Psoas muscle (tissue), 8 donors: ENCODE measurements at regions of chr11 and their contacts with region 1.

Region 1: DNA sequence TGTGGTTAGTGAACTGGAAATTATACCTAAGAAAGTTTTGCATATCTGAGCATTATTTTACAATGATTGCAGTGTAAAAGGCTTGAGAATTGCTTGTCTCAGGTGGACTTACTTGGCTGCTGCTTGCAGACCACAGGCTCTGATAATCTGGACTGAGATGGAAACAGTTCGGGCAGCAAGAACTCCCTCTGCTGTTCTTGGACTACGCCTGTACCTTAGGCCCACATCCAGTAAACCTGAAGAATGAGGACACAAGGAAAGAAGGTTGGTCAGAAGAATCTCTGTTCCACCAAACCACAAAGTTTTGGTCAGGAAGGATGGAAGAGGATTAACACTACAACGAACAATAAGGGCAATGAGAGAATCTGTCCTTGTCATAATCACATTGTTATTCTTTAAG is 80.1 kb downstream of the C2CD3 start:
- DNase-seq: no peak
- ATAC-seq: peak; percentile 61 to 86 (median 70)
- H3K4me3 ChIP-seq: no peak overlapping the region
- H3K27ac ChIP-seq: no peak overlapping the region
- H3K4me1 ChIP-seq: no peaks in the 10 kb centered on the region
- H3K27me3 ChIP-seq: no peaks in the 10 kb centered on the region
- CTCF ChIP-seq: peak; percentile 46

Region 2: DNA sequence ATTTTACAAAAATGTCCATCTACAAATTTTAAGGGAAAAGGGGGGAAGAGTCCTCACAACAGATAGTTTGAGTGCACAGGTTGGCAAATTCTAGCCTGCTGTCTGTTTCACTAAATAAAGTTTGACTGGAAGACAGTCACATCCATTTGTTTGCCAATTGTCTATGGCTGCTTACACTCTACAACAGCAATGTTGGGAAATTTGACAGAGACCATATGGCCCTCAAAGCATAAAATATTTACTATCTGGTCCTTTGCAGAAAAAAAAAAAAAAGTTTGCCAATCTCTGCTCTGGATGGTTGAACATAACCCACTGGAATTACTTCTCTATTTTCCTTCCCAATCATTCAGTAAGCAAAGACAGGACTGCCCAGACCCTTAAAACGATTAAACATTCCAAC is 1036.7 kb before region 1 on chr11:
- intact Hi-C with region 1: no loop called
- DNase-seq: no peak
- ATAC-seq: no peak
- H3K4me3 ChIP-seq: no peak overlapping the region
- H3K27ac ChIP-seq: no peak overlapping the region
- H3K4me1 ChIP-seq: no peaks in the 10 kb centered on the region
- H3K27me3 ChIP-seq: no peaks in the 10 kb centered on the region
- CTCF ChIP-seq: no peak

Region 3: GRCh38 chr11:73965076-73965860 is 125.4 kb before region 1 on chr11:
- intact Hi-C with region 1: loop called (anchors 2 to 5 kb)
- DNase-seq: peak in 1 of 2 donors; percentile 46
- ATAC-seq: no peak
- H3K4me3 ChIP-seq: no peak overlapping the region
- H3K27ac ChIP-seq: no peak overlapping the region
- H3K4me1 ChIP-seq: peaks cover 7% of the 10 kb centered on the region
- H3K27me3 ChIP-seq: no peaks in the 10 kb centered on the region
- CTCF ChIP-seq: no peak

Region 4: DNA sequence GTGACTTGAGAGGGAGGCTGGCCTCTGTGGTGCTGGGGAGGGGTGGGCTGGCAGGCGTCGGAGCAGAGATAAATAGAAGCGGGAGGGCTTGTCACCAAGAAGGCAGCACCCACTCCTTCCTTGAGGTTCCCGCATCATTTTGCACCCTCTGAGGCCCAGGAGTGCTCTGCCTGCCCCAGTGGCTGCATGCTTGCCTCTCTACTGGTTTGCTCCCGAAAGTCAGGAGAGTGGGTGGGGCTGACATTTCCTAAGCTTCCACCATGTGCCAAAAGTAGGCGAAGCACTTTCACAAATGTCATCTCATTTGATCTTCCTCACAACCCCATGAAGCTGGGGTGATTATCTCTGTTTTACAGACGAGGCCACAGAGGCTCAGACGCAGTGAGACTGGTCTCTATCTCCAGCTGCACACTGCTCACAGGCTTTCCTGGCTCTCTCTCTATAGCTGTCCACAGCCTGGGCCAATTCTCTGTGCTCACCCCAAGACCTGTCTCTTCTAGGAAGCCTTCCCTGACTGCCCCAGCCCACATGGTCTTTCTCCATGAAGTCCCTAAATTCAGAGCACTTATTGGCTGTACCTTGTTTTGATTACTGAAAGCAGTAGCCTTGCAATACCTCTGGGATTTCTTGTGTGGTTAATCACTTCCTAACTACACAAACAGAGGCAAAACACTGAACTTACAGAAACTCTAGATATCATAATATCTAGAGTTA is 79.2 kb before region 1 on chr11:
- intact Hi-C with region 1: no loop called
- DNase-seq: no peak
- ATAC-seq: no peak
- H3K4me3 ChIP-seq: no peak overlapping the region
- H3K27ac ChIP-seq: peak overlapping the region; percentile 98
- H3K4me1 ChIP-seq: peaks cover 28% of the 10 kb centered on the region
- H3K27me3 ChIP-seq: no peaks in the 10 kb centered on the region
- CTCF ChIP-seq: no peak

Region 5: GRCh38 chr11:74269161-74269811 is 178.6 kb after region 1 on chr11:
- intact Hi-C with region 1: no loop called
- DNase-seq: no peak
- ATAC-seq: peak in 1 of 4 donors; percentile 8
- H3K4me3 ChIP-seq: no peak overlapping the region
- H3K27ac ChIP-seq: no peak overlapping the region
- H3K4me1 ChIP-seq: no peaks in the 10 kb centered on the region
- H3K27me3 ChIP-seq: no peaks in the 10 kb centered on the region
- CTCF ChIP-seq: no peak

Region 6: DNA sequence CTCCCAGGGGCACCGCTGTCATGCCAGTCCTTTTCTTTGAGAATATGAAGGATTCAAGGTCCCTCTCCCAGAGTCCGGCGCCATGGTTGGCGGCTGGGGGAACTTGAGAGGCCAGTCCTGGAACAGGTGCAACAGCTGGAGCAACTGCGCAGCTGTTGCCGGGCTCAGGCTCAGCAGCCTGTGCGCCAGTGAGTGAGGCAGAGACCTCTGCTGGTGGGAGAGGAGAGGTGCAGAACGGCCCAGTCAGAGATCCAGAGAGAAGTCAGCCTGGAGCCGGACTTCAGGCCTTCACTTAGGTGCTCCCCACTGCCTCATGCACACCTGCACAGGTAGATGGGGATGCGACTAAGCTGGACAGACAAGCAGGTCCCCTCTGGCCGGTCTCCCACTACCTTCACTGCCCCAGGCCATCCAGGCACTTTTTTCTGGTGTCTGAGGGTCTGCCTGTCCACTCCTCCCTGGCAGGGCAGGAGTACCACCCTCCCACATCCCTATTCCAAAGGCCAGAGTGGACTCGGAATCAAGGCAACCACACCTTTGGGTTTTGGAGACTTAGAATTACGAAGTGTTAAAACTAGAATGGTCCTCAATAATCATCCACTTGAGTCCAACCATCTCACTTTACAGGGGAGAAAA is 636.0 kb after region 1 on chr11:
- intact Hi-C with region 1: no loop called
- DNase-seq: peak; percentile 83 to 92
- ATAC-seq: peak; percentile 98 to 99 (median 98)
- H3K4me3 ChIP-seq: no peak overlapping the region
- H3K27ac ChIP-seq: peak overlapping the region; percentile 32
- H3K4me1 ChIP-seq: peaks cover 3% of the 10 kb centered on the region
- H3K27me3 ChIP-seq: peaks cover 0 to 19% (median 8%) of the 10 kb centered on the region in 3 donors
- CTCF ChIP-seq: peak; percentile 93